K562 (cell line): ENCODE measurements at regions of chr17 and their contacts with region 1.

Region 1: DNA sequence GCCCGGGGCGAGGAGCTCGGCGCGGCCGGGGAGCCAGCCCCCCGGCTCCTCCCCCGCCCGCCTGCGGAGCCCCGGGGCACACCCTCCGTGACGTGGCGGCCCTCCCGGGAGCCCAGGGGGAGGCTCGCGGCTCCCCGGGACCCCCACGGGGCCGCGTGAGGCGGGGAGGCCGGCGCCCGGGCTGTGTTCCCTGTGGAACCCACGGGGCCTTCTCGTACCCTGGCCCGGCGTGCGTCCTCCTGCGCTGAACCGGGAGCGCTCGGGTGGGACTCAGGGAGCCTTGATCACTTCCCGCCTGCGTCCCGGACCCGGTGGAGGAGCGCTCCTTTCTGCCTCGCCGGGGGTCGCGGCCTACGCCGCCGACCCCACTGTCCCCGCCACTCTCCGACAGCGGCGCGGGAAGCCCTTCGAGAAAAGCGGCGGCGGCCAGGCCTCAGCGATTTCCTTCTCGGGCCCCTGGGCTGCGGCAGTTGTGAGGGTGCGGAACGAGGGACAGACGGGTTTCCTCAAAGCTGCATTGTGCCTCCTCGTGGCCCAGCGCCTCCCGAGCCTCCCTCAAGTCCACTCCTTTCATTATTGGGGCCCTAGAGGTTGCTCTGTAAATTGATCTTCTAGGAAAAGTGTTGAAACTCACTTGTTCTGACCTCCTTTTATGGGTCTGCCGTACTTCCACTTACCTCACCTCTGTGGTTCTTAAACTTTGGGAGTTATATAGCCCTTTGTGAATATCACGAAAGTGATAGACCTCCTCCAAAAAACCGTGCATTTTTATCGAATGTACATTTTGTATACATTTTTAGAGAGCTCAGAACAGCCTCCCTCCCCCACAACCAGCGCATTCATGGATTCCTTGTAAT is 597 bp downstream of the LIG3 start:
- DNase-seq: peak; percentile 85 to 97 (median 94)
- ATAC-seq: peak; percentile 88
- H3K4me3 ChIP-seq: peak overlapping the region; percentile 78
- H3K27ac ChIP-seq: peak overlapping the region; percentile 96
- H3K4me1 ChIP-seq: peaks cover 17 to 26% of the 10 kb centered on the region in 2 experiments; a peak in 4 of 5 replicates
- H3K27me3 ChIP-seq: no peaks in the 10 kb centered on the region
- CTCF ChIP-seq: peak; percentile 47 to 74 (median 67)
- EP300 ChIP-seq: no peak
- POLR2A ChIP-seq: peak; percentile 59
- RAD21 ChIP-seq: peak; percentile 7 to 13; a peak in 2 of 4 replicates

Region 2: DNA sequence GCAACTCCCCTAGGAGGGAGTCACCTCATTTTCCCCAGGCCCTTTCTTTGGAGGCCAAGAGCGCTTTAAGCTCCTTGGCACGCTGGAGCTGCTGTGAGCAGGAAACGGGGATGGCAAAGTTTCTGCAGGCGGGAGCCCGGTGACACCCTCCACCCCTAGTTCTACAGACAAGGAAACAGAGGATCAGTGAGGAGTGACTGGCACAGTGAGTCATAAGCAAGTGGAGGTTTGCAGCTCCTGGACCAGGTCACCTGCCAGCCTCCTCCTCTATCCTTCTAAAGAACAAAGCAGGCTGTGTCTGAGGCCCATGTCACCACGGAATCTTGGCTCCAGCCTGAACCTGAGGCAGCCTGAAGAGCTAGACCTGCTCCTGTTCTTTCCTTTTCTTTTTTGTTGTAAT is 259.6 kb before region 1 on chr17:
- CTCF ChIA-PET with region 1: no interaction called
- POLR2A ChIA-PET with region 1: no interaction called
- in situ Hi-C with region 1: no loop called
- intact Hi-C with region 1: no loop called
- DNase-seq: no peak
- ATAC-seq: no peak
- H3K4me3 ChIP-seq: no peak overlapping the region
- H3K27ac ChIP-seq: no peak overlapping the region
- H3K4me1 ChIP-seq: no peaks in the 10 kb centered on the region
- H3K27me3 ChIP-seq: peaks cover 0 to 11% of the 10 kb centered on the region in 2 experiments; a peak in 2 of 5 replicates
- CTCF ChIP-seq: no peak
- EP300 ChIP-seq: no peak
- POLR2A ChIP-seq: no peak
- RAD21 ChIP-seq: no peak

Region 3: GRCh38 chr17:34840750-34841149 is 140.2 kb before region 1 on chr17:
- CTCF ChIA-PET with region 1: no interaction called
- POLR2A ChIA-PET with region 1: no interaction called
- in situ Hi-C with region 1: no loop called
- intact Hi-C with region 1: no loop called
- DNase-seq: no peak
- ATAC-seq: no peak
- H3K4me3 ChIP-seq: no peak overlapping the region
- H3K27ac ChIP-seq: no peak overlapping the region
- H3K4me1 ChIP-seq: no peaks in the 10 kb centered on the region
- H3K27me3 ChIP-seq: peaks cover 3 to 19% of the 10 kb centered on the region in 2 experiments; a peak in 3 of 5 replicates
- CTCF ChIP-seq: no peak
- EP300 ChIP-seq: no peak
- POLR2A ChIP-seq: no peak
- RAD21 ChIP-seq: no peak

Region 4: DNA sequence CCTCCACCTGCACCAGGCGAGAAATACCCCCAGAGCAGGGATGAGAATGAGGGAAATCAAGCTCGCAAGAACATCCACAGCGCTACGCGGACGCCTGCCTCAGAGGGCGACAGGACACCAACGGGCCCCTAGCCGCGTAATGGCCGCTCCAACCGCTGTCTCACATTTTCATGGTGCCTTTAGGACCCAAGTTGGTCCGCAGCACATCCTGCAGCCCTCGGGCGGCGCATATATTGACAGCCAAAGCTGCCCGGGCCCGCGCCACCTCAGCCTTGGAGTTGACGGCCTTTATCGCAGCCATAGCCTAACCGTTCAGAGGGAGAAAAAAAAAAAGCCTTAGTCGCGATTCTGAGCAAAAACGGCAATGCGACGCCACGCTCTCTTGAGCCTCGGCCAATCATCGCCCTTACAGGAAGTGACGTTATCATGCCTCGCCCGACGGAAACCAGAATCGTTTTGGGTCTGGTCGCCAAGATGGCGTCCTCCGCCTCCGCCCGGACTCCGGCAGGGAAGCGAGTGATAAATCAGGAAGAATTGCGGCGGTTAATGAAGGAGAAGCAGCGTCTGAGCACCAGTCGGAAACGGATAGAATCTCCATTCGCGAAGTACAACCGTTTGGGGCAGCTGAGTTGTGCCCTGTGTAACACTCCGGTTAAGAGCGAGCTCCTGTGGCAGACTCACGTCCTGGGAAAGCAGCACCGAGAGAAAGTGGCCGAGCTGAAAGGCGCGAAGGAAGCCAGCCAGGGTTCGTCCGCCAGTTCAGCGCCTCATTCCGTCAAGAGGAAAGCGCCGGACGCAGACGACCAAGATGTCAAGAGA is 19.6 kb before region 1 on chr17 and contains the starts of genes CCT6B and ZNF830:
- CTCF ChIA-PET with region 1: no interaction called
- POLR2A ChIA-PET with region 1: interaction called, 6 read pairs
- in situ Hi-C with region 1: no loop called
- intact Hi-C with region 1: loop called (anchors 2 kb)
- DNase-seq: peak; percentile 91 to 96 (median 93)
- ATAC-seq: peak; percentile 96
- H3K4me3 ChIP-seq: peak within 1 kb of the TSS; percentile 79
- H3K27ac ChIP-seq: peak within 1 kb of the TSS; percentile 96
- H3K4me1 ChIP-seq: no peaks in the 10 kb centered on the region
- H3K27me3 ChIP-seq: no peaks in the 10 kb centered on the region
- CTCF ChIP-seq: no peak
- EP300 ChIP-seq: peak; percentile 14; the same call in 1 of the 2 replicates
- POLR2A ChIP-seq: peak; percentile 97
- RAD21 ChIP-seq: no peak
- polyA plus RNA-seq, gene CCT6B: 0.25 to 0.83 TPM
- polyA plus RNA-seq, gene ZNF830: 13.1 to 18.8 TPM

Region 5: GRCh38 chr17:34990921-34991365 is 10.0 kb after region 1 on chr17:
- CTCF ChIA-PET with region 1: no interaction called
- POLR2A ChIA-PET with region 1: interaction called, 27 read pairs
- in situ Hi-C with region 1: no loop called
- intact Hi-C with region 1: no loop called
- DNase-seq: no peak
- ATAC-seq: no peak
- H3K4me3 ChIP-seq: no peak overlapping the region
- H3K27ac ChIP-seq: no peak overlapping the region
- H3K4me1 ChIP-seq: peaks cover 8 to 14% of the 10 kb centered on the region in 2 experiments; a peak in 4 of 5 replicates
- H3K27me3 ChIP-seq: no peaks in the 10 kb centered on the region
- CTCF ChIP-seq: no peak
- EP300 ChIP-seq: no peak
- POLR2A ChIP-seq: no peak
- RAD21 ChIP-seq: no peak

Region 6: DNA sequence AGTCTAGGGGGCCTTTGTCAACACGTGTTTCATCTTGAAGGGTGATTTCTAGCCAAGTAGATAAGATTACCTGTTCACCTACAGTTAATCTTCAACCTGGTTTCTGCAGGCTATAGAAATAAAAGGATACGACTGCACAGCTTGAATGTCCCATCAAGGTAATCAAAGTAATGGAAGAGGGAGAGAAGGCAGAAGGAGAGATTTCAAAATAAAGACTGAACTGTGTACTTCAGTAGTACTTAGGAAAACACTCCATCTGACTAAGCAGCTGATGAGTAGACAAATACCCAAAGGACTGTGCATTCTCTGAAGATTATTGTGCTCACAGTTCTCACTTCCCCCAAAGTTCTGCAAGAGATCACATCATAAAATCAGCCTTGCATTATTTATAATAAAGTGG is 88.4 kb after region 1 on chr17:
- CTCF ChIA-PET with region 1: no interaction called
- POLR2A ChIA-PET with region 1: interaction called, 7 read pairs
- in situ Hi-C with region 1: no loop called
- intact Hi-C with region 1: loop called (anchors 5 kb)
- DNase-seq: no peak
- ATAC-seq: no peak
- H3K4me3 ChIP-seq: no peak overlapping the region
- H3K27ac ChIP-seq: no peak overlapping the region
- H3K4me1 ChIP-seq: peaks cover 11 to 18% of the 10 kb centered on the region in 2 experiments; a peak in 4 of 5 replicates
- H3K27me3 ChIP-seq: no peaks in the 10 kb centered on the region
- CTCF ChIP-seq: no peak
- EP300 ChIP-seq: no peak
- POLR2A ChIP-seq: no peak
- RAD21 ChIP-seq: no peak

Region 7: DNA sequence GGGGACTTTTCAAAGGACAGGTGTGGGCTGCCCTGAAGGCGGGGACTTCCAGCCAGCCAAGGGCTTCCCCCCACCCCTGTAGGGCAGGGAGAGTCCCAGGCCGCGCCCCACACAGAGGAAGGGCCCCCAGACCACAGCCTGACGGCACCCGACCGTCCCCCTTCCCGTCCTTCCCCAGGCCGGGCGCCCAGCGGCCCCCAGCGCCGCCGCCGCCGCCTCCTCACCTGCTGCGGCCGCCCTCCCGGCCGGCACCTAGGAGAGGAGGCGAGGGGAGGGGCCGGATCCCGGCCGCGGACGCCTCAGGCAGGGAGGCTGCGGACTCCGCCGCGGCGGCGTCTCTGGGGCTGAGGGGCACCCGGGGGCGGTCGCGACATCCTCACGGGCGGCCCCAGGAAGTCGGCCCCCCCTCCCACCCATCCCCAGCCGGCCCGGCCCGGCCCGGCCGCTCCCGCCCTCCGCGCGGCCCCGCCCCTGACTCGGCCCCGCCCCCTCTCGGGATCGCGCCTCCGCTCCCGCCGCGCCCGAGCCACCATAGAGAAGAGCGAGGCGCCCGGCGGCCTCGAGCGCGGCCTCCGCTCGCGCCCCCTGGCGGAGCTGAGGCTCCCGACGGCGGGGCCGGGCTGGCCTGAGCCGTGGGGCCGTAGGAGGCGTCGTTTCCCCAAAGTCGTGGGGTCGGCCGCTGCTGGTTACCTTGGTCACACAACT is 108.1 kb after region 1 on chr17:
- CTCF ChIA-PET with region 1: no interaction called
- POLR2A ChIA-PET with region 1: interaction called, 3 read pairs
- in situ Hi-C with region 1: no loop called
- intact Hi-C with region 1: loop called (anchors 5 kb)
- DNase-seq: peak; percentile 91 to 96 (median 94)
- ATAC-seq: peak; percentile 89
- H3K4me3 ChIP-seq: peak overlapping the region; percentile 87
- H3K27ac ChIP-seq: peak overlapping the region; percentile 78
- H3K4me1 ChIP-seq: peaks cover 19 to 22% of the 10 kb centered on the region in 2 experiments
- H3K27me3 ChIP-seq: no peaks in the 10 kb centered on the region
- CTCF ChIP-seq: peak; percentile 79 to 97 (median 87)
- EP300 ChIP-seq: peak; percentile 12; the same call in 1 of the 2 replicates
- POLR2A ChIP-seq: no peak
- RAD21 ChIP-seq: peak in 1 of 2 experiments; percentile 64; a peak in 3 of 4 replicates

Region 8: DNA sequence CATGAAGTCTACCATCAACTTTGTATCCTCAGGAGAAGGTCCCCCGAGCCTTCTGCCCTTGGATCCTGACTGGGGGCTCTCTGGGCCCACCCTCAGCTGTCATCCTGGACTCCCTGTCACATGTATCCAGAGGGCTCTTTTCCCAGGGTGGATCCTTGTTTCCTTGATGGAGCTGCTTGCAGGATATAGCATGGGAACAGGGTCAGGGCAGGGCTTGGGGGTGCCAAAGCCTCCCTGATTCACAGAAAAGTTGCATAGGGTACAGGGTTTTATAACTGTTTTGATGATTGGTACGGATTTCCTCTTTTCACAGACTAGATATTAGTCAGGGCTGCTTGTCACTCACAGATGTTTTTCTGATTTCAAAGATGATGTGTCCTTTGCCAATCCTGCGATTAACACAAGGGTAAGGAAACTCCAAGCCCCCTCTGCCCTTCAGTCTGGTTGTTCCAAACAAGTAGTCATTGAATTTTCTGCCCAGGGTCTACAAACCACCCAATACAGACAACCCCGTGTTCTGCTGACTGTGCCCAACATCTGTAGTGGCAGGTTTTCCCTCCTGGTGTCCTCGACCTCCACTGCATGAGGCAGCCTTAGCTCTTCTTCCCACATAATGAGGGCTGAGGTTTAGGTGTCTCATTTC is 233.8 kb after region 1 on chr17:
- CTCF ChIA-PET with region 1: no interaction called
- POLR2A ChIA-PET with region 1: no interaction called
- in situ Hi-C with region 1: no loop called
- intact Hi-C with region 1: no loop called
- DNase-seq: no peak
- ATAC-seq: no peak
- H3K4me3 ChIP-seq: no peak overlapping the region
- H3K27ac ChIP-seq: no peak overlapping the region
- H3K4me1 ChIP-seq: no peaks in the 10 kb centered on the region
- H3K27me3 ChIP-seq: peaks cover 5 to 14% of the 10 kb centered on the region in 2 experiments; a peak in 2 of 5 replicates
- CTCF ChIP-seq: no peak
- EP300 ChIP-seq: no peak
- POLR2A ChIP-seq: no peak
- RAD21 ChIP-seq: no peak